ENCODE measurements at regions of chr11 and their contacts with region 1.

Region 1: GRCh38 chr11:72413914-72414628 is 20.3 kb downstream of the CLPB start:
- DNase-seq: peak; percentile 87
- ATAC-seq: peak; percentile 74
- H3K4me3 Mint-ChIP-seq: no peak overlapping the region
- H3K27ac Mint-ChIP-seq: no peak overlapping the region
- H3K4me1 Mint-ChIP-seq: peaks cover 27% of the 10 kb centered on the region
- H3K27me3 Mint-ChIP-seq: no peaks in the 10 kb centered on the region
- CTCF ChIP-seq: peak; percentile 80

Region 2: DNA sequence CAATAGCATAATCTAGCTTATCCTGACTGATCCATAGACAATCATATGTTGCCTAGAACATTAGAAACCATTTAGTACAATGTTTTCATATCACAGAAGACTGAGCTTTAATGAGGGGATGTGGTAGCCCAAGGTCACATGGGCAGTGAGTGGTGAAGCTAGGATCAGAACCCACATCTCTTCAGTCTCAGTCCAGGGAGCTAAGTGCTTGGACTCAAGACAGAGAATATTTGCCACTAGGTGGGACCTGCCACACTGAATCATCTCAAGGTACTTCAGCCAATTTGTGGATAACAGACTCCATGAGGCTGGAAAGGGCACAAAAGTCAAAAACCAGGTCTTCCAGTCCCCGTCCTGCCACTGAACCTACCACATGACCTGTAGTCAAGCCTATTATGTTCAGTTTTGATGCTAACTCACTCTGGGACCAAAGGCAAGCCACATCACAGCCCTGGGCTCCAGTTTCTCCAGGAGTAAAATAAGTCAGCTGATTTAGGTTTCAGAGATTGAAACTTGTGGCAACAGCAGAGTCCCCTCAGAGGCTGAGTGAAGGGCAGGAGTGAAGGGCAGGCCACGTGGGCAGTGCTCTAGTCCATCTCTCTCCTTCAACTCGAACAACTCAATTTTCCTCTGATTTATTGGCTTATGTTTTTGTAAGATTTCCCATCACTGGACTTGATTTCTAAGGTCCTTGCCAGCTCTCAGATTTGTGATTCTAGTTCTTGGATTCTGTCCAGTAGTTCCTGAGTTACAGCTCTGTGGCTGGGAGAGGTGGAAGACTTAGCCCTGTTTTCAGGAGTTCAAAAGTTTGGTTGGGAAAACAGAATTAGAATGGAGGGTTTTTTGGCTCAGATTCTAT is 85.5 kb before region 1 on chr11:
- CTCF ChIA-PET with region 1: interaction called, 21 read pairs
- POLR2A ChIA-PET with region 1: no interaction called
- intact Hi-C with region 1: no loop called
- DNase-seq: no peak
- ATAC-seq: no peak
- H3K4me3 Mint-ChIP-seq: no peak overlapping the region
- H3K27ac Mint-ChIP-seq: no peak overlapping the region
- H3K4me1 Mint-ChIP-seq: peaks cover 25% of the 10 kb centered on the region
- H3K27me3 Mint-ChIP-seq: no peaks in the 10 kb centered on the region
- CTCF ChIP-seq: no peak

Measured in activated CD8-positive, alpha-beta T cell treated with anti-CD3 and anti-CD28 coated beads for 36 hours (primary cell).